ENCODE measurements at regions of chr1 and their contacts with region 1.

Region 1: GRCh38 chr1:182962554-182963115 is 9.7 kb upstream of the SHCBP1L start:
- DNase-seq: peak; percentile 80
- H3K4me3 Mint-ChIP-seq: peak overlapping the region; percentile 63
- H3K27ac Mint-ChIP-seq: peak overlapping the region; percentile 86
- H3K4me1 Mint-ChIP-seq: peaks cover 37% of the 10 kb centered on the region
- H3K27me3 Mint-ChIP-seq: no peaks in the 10 kb centered on the region
- CTCF ChIP-seq: peak; percentile 89

Region 2: DNA sequence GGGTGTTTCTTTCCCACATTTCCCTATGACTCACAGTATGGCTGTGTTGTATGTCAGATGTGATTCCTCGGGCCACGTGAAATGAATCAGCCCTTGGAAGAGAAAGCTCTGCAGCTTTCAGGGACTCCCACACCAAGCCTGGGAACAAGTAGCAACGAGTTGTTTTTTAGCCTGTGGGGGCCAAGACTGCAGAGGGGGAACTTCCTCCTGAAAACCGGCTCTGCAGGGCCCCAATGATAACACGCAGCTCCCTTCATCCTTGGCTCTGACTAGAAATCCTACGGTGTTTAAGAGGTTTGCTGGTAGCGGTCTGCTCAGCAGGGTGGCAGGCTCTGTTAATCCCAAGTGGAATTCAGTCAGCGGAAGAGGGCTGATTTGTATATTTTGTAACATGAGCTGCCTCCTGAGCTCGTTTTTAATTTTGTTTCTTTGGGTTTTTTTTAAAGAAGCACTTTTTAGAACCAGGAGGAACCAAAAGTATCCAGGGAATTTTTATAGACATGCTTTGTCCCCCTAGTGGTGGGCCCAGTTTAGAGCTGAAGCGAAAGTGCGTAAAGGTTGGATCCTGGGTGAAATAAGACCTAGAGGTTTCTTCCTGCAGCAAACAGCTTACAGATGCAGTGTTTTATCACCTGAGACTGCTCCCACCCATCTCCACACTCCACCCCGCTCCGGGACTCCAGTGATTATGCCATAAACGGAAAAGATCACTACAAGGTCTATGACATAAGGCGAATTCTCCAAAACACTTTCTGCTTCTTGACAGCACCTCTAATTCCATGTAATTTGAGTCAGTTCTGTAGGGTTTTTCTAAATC is 272.2 kb after region 1 on chr1:
- CTCF ChIA-PET with region 1: interaction called, 3 read pairs
- intact Hi-C with region 1: loop called (anchors 2 kb)
- DNase-seq: peak; percentile 53
- H3K4me3 Mint-ChIP-seq: no peak overlapping the region
- H3K27ac Mint-ChIP-seq: peak overlapping the region; percentile 71
- H3K4me1 Mint-ChIP-seq: peaks cover 37% of the 10 kb centered on the region
- H3K27me3 Mint-ChIP-seq: no peaks in the 10 kb centered on the region
- CTCF ChIP-seq: peak; percentile 26

Region 3: DNA sequence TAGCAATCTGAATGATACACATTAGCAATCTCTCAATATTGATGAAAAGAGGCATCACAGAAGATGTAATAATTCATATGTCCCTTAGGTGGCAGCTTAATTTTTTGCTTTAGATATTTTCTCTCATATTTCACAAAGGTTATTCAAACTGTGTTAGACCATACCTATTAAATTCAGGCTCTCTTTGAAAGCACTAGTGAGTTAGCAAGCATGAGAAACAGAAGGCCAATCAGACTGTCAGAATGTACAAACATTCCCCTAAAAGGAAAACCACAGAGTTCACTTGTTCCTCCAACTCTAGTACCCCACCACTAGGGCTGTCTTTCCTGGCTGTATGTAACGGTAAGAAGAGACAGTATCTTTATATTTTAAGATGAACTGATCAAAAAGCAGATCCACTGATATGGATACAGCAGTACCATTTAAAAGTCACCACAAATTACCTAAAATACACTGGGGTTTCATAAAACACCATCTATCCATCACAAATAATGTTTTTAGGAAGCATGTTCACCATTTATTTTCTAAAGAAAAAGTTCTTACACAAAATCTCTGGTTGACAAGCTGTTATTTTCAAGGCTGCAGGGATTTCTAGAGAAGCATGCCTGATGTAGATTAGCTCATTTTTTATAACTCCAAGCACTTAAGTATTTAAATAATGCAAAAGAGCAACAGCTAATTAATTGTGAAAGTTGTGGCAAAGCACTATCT is 671.2 kb after region 1 on chr1:
- CTCF ChIA-PET with region 1: no interaction called
- intact Hi-C with region 1: loop called (anchors 5 kb)
- DNase-seq: peak; percentile 31
- H3K4me3 Mint-ChIP-seq: peak overlapping the region; percentile 95
- H3K27ac Mint-ChIP-seq: peak overlapping the region; percentile 50
- H3K4me1 Mint-ChIP-seq: peaks cover 31% of the 10 kb centered on the region
- H3K27me3 Mint-ChIP-seq: peaks cover 10% of the 10 kb centered on the region
- CTCF ChIP-seq: peak; percentile 54

Measured in Calu3 (cell line).